ENCODE measurements at regions of chr20 and their contacts with region 1.

Region 1: GRCh38 chr20:46132705-46133120 is 14.6 kb downstream of the CD40 start:
- DNase-seq: peak; percentile 47
- H3K4me3 ChIP-seq: no peak overlapping the region
- H3K27ac ChIP-seq: no peak overlapping the region
- H3K4me1 ChIP-seq: no peaks in the 10 kb centered on the region
- H3K27me3 ChIP-seq: no peaks in the 10 kb centered on the region
- CTCF ChIP-seq: peak; percentile 76

Region 2: DNA sequence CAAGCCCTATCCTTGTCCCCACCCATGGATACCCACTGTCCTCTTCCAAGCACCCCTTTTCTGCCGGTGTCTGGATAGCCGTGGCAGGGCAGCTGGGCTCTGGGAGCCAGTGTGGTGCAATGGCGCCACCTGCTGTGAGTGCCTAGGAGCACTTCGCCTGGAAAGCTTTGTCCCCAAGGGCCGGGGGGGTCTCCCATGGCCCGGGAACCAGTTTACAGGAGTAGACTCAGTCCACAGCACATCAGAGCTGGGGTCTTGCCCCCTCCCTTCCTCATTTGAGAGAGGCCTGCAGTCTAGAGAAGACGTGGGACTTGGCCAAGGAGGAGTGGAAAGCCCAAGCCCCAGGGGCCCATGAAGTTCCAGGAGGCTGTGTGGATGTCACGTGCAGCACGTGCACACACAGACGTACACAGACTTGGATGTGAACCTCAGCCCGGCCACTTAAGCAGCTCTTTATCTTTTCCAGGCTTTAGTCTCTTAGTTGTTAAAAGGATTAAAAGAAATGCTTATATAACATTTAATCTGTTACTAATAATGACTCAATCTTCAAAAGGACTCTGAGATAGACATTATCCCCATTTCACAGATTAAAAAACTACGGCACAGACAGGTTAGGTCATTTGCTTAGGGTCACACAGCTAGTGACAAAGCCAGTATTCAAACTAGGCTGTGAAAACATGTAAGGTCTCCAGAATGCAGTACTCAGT is 216.5 kb after region 1 on chr20:
- intact Hi-C with region 1: loop called (anchors 10 kb)
- DNase-seq: peak; percentile 35
- H3K4me3 ChIP-seq: no peak overlapping the region
- H3K27ac ChIP-seq: no peak overlapping the region
- H3K4me1 ChIP-seq: no peaks in the 10 kb centered on the region
- H3K27me3 ChIP-seq: no peaks in the 10 kb centered on the region
- CTCF ChIP-seq: peak; percentile 79

Region 3: DNA sequence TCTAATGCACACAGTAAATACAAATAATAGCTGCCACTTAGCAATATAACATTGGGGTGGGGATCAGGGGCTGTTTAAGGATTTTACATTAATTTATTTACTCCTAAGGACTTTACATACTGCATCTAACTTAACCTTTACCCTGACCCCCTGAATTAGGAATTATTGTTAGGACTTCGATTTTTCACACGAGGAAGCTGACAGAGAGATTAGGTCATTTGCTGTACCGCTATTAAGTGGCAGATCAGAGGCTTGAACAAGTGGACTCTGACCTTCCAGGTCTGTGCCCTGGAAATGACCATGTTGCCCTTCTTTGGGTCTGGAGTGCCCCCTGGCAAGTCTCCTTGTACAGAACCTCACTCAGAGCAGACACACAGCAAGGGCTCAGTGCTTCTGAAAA is 278.9 kb after region 1 on chr20:
- intact Hi-C with region 1: loop called (anchors 2 kb)
- DNase-seq: no peak
- H3K4me3 ChIP-seq: no peak overlapping the region
- H3K27ac ChIP-seq: no peak overlapping the region
- H3K4me1 ChIP-seq: no peaks in the 10 kb centered on the region
- H3K27me3 ChIP-seq: no peaks in the 10 kb centered on the region
- CTCF ChIP-seq: no peak